Right cardiac atrium (tissue), 5 donors: ENCODE measurements at regions of chr12 and their contacts with region 1.

Region 1: DNA sequence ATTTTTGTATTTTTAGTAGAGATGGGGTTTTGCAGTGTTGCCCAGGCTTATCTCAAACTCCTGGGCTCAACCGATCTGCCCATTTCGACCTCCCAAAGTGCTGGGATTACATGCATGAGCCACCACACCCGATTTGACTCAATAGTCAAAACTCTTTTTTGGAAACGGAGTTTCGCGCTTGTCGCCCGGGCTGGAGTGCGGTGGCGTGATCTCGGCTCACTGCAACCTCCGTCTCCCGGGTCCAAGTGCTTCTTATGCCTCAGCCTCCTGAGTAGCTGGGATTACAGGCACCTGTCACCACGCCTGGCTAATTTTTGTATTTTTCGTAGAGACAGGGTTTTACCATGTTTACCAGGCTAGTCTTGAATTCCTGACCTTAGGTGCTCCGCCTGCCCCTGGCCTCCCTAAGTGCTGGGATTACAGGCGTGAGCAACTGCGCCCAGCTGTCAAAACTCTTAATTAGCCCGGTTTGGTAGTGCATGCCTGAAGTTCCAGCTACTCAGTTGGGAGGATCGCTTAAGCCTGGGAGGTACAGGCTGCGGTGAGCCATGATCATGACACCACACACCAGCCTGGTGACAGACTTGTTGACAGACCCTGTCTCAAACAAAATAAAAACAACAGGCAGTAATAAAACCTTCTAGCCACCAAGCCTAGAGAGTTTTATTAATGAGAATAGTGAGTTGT is 12.4 kb downstream of the MED21 start:
- DNase-seq: no peak
- ATAC-seq: no peak
- H3K4me3 ChIP-seq: no peak overlapping the region
- H3K27ac ChIP-seq: no peak overlapping the region
- H3K4me1 ChIP-seq: no peaks in the 10 kb centered on the region
- H3K27me3 ChIP-seq: no peaks in the 10 kb centered on the region

Region 2: DNA sequence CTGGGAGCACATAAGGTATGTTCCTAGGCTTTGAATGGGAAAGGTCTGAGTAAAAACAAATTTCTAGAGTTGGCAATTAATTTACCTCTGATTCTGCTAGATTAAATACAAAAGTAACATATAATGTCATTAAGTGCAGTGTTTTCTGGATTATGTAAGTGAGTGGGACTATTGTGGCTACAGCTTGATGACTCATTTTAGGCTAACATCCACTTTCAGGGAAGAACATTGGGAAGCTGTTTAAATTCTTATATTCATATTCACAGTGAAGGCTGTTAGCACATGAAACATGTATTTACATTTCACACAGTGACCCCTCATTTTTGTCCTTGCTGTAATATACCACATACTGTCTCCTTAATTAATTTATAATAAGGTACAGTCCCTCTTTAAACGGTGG is 284.7 kb after region 1 on chr12:
- intact Hi-C with region 1: loop called in 1 of 4 experiments (anchors 10 kb)
- DNase-seq: no peak
- ATAC-seq: no peak
- H3K4me3 ChIP-seq: no peak overlapping the region
- H3K27ac ChIP-seq: no peak overlapping the region
- H3K4me1 ChIP-seq: no peaks in the 10 kb centered on the region
- H3K27me3 ChIP-seq: no peaks in the 10 kb centered on the region